PC-9 (cell line): ENCODE measurements at regions of chr1 and their contacts with region 1.

Region 1: DNA sequence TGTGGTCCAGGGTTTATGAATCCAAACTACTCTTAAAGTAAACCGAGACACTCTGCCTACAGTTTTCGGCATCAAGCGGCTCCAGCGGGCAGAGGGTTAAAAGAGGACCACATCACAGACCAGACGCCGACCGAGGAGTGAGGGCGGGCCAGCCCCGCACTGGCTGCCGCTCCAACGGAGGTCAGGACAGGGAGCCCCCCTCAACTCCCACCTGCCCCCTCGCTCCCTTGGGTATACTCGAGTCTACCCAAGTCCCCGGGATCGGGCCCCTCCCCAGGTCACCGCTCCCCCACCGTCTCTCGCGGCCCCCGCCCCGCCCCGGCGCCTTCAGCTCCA is 312 bp downstream of the ARNT start:
- DNase-seq: peak; percentile 37 to 54
- H3K4me3 ChIP-seq: peak overlapping the region; percentile 97
- H3K27ac ChIP-seq: peak overlapping the region; percentile 35; the same call in 1 of the 2 replicates
- H3K4me1 ChIP-seq: peaks cover 24% of the 10 kb centered on the region
- H3K27me3 ChIP-seq: no peaks in the 10 kb centered on the region
- CTCF ChIP-seq: no peak

Region 2: GRCh38 chr1:150544204-150544603 is 331.9 kb before region 1 on chr1:
- CTCF ChIA-PET with region 1: no interaction called
- POLR2A ChIA-PET with region 1: interaction called, 12 read pairs
- intact Hi-C with region 1: no loop called
- DNase-seq: no peak
- H3K4me3 ChIP-seq: no peak overlapping the region
- H3K27ac ChIP-seq: no peak overlapping the region
- H3K4me1 ChIP-seq: no peaks in the 10 kb centered on the region
- H3K27me3 ChIP-seq: no peaks in the 10 kb centered on the region
- CTCF ChIP-seq: no peak

Region 3: GRCh38 chr1:150973826-150974579 is 97.9 kb after region 1 on chr1:
- CTCF ChIA-PET with region 1: no interaction called
- POLR2A ChIA-PET with region 1: interaction called, 19 read pairs
- intact Hi-C with region 1: loop called (anchors 5 kb)
- DNase-seq: peak in 1 of 2 experiments; percentile 26
- H3K4me3 ChIP-seq: peak overlapping the region; percentile 93
- H3K27ac ChIP-seq: no peak overlapping the region
- H3K4me1 ChIP-seq: peaks cover 61% of the 10 kb centered on the region
- H3K27me3 ChIP-seq: no peaks in the 10 kb centered on the region
- CTCF ChIP-seq: no peak

Region 4: DNA sequence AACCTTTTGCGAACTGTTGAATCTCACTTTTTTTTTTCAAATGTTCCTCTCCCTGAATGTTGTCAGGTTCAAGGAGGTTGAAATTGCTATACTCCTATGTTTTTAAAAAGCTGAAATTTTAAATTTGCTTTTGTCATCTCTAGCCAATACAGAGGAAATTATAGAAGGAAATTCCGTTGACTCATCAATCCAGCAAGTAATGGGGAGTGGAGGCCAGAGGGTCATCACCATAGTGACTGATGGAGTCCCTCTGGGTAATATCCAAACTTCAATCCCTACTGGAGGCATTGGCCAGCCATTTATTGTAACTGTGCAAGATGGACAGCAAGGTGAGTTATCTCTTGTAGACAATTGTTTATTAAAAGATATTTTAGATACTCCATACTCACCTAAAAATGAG is 230.8 kb after region 1 on chr1:
- CTCF ChIA-PET with region 1: no interaction called
- POLR2A ChIA-PET with region 1: no interaction called
- intact Hi-C with region 1: no loop called
- DNase-seq: no peak
- H3K4me3 ChIP-seq: no peak overlapping the region
- H3K27ac ChIP-seq: no peak overlapping the region
- H3K4me1 ChIP-seq: no peaks in the 10 kb centered on the region
- H3K27me3 ChIP-seq: no peaks in the 10 kb centered on the region
- CTCF ChIP-seq: no peak